ENCODE measurements at regions of chr7 and their contacts with region 1.

Region 1: GRCh38 chr7:148987010-148987750 is 41.1 kb downstream of the PDIA4 start:
- DNase-seq: peak; percentile 43 to 93 (median 80)
- ATAC-seq: peak; percentile 76
- H3K4me3 ChIP-seq: peak overlapping the region; percentile 82 to 97
- H3K4me3 Mint-ChIP-seq: peak overlapping the region; percentile 96
- H3K27ac ChIP-seq: peak overlapping the region; percentile 74 to 93
- H3K27ac Mint-ChIP-seq: peak overlapping the region; percentile 96
- H3K4me1 ChIP-seq: peaks cover 41% of the 10 kb centered on the region
- H3K4me1 Mint-ChIP-seq: peaks cover 52% of the 10 kb centered on the region
- H3K27me3 ChIP-seq: no peaks in the 10 kb centered on the region
- H3K27me3 Mint-ChIP-seq: no peaks in the 10 kb centered on the region
- CTCF ChIP-seq: no peak

Region 2: GRCh38 chr7:149028346-149029109 is 41.3 kb after region 1 on chr7 and contains the start of gene PDIA4:
- CTCF ChIA-PET with region 1: no interaction called
- POLR2A ChIA-PET with region 1: interaction called, 5 read pairs
- intact Hi-C with region 1: loop called (anchors 1 kb)
- DNase-seq: peak; percentile 98 to 100 (median 99)
- ATAC-seq: peak; percentile 88
- H3K4me3 ChIP-seq: peak within 1 kb of the TSS; percentile 58 to 78
- H3K4me3 Mint-ChIP-seq: peak within 1 kb of the TSS; percentile 87
- H3K27ac ChIP-seq: peak within 1 kb of the TSS; percentile 62 to 78
- H3K27ac Mint-ChIP-seq: peak within 1 kb of the TSS; percentile 94
- H3K4me1 ChIP-seq: peaks cover 27% of the 10 kb centered on the region
- H3K4me1 Mint-ChIP-seq: peaks cover 49% of the 10 kb centered on the region
- H3K27me3 ChIP-seq: no peaks in the 10 kb centered on the region
- H3K27me3 Mint-ChIP-seq: no peaks in the 10 kb centered on the region
- CTCF ChIP-seq: no peak
- total RNA-seq, gene PDIA4: 12.0 to 14.5 TPM

Region 3: GRCh38 chr7:150368096-150368883 is 1381.1 kb after region 1 on chr7 and contains the start of gene REPIN1:
- CTCF ChIA-PET with region 1: no interaction called
- POLR2A ChIA-PET with region 1: no interaction called
- intact Hi-C with region 1: no loop called
- DNase-seq: peak; percentile 52 to 90 (median 85)
- ATAC-seq: no peak
- H3K4me3 ChIP-seq: peak within 1 kb of the TSS; percentile 78 to 95
- H3K4me3 Mint-ChIP-seq: peak within 1 kb of the TSS; percentile 95
- H3K27ac ChIP-seq: peak within 1 kb of the TSS; percentile 53 to 73
- H3K27ac Mint-ChIP-seq: peak within 1 kb of the TSS; percentile 95
- H3K4me1 ChIP-seq: peaks cover 47% of the 10 kb centered on the region
- H3K4me1 Mint-ChIP-seq: peaks cover 58% of the 10 kb centered on the region
- H3K27me3 ChIP-seq: no peaks in the 10 kb centered on the region
- H3K27me3 Mint-ChIP-seq: no peaks in the 10 kb centered on the region
- CTCF ChIP-seq: no peak
- total RNA-seq, gene REPIN1: 54.0 to 54.1 TPM

Measured in CD8-positive, alpha-beta T cell (primary cell).